Activated naive CD4-positive, alpha-beta T cell treated with anti-CD3 and anti-CD28 coated beads, Interleukin-2, amount 10 ng/mL, durations not matched to agents 7 days and 5 days (primary cell): ENCODE measurements at regions of chr22 and their contacts with region 1.

Region 1: GRCh38 chr22:37686002-37686982 is at the start of gene NOL12:
- DNase-seq: peak; percentile 83
- H3K4me3 Mint-ChIP-seq: peak within 1 kb of the TSS; percentile 92
- H3K27ac Mint-ChIP-seq: peak within 1 kb of the TSS; percentile 90
- H3K4me1 Mint-ChIP-seq: peaks cover 32% of the 10 kb centered on the region
- H3K27me3 Mint-ChIP-seq: no peaks in the 10 kb centered on the region

Region 2: DNA sequence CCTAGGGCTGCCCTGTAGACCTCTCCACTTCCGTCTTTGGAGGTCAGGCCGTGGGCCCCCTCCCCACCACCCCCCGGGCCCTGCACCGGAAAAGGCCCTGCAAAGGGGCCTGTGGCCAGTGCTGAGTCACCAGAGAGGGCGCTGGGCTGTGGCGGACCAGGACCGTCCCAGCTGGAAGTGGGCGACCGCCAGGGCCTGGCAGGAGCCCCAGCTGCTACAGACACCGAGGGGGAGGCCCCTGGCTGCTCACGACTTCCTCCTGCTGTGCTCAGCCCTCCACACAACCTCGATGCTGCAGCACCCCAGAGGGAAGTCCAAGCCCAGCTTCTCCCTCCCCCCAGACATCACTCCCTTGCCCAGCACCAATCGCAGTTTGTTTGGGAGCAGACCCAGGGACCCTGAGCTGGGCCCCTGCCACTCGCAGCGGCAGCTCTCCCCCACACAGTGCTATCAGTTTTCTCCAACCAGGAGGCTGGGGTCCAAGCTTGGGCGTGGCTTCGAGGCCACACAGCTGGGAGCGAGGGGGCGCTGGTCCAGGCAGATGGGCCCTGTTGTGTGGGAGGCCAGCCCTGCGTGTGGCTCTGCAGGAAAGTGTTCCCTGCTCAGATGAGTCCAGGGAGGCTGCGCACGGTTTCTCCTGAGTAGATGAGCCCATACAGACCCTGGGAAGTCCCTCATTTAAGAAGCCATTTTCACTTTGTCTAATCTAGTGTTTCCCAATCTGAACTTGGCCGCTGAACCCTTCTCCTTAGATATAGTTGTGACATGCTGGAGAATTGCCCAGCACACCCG is 52.5 kb before region 1 on chr22:
- CTCF ChIA-PET with region 1: interaction called, 506 read pairs
- DNase-seq: peak; percentile 67
- H3K4me3 Mint-ChIP-seq: peak overlapping the region; percentile 46
- H3K27ac Mint-ChIP-seq: peak overlapping the region; percentile 90
- H3K4me1 Mint-ChIP-seq: peaks cover 73% of the 10 kb centered on the region
- H3K27me3 Mint-ChIP-seq: no peaks in the 10 kb centered on the region

Region 3: DNA sequence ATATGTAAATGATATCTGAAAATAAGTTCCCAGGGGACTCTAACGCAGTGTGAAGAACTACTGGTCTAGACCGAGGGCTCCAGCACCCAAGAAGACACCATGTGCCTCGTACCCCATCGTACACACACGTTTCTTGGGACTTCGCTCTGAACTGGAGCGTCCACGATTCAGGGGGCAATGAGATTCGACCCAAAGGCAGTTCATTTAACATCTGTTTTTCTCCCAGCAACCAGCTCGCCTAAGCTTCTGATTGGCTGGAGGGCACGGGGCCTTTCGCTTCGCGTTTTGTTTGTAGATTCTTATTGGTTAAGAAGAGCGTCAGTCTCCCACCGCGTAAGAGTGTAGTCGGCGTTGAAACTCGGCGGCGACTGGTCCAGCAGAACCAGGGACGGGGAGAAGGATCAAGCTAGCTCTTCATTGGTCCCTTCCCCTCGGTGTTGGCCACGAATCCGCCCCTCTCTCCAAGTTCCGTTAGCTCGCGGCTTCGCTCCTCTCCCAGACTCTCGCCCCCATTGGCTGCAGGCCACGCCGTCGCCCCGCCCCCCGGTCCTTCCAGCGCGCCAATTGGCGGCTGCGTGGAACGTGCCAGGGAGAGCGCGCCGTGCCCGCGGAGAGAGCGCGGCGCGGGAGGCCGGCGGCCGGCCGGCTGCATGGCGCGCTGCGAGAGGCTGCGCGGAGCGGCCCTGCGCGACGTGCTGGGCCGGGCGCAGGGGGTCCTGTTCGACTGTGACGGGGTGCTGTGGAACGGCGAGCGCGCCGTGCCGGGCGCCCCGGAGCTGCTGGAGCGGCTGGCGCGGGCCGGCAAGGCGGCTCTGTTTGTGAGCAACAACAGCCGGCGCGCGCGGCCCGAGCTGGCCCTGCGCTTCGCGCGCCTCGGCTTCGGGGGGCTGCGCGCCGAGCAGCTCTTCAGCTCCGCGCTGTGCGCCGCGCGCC is 27.9 kb before region 1 on chr22 and contains the start of gene PDXP:
- CTCF ChIA-PET with region 1: interaction called, 54 read pairs
- DNase-seq: peak; percentile 99
- H3K4me3 Mint-ChIP-seq: peak within 1 kb of the TSS; percentile 81
- H3K27ac Mint-ChIP-seq: peak within 1 kb of the TSS; percentile 90
- H3K4me1 Mint-ChIP-seq: peaks cover 40% of the 10 kb centered on the region
- H3K27me3 Mint-ChIP-seq: no peaks in the 10 kb centered on the region

Region 4: GRCh38 chr22:37672206-37672919 is 13.9 kb before region 1 on chr22:
- CTCF ChIA-PET with region 1: interaction called, 11 read pairs
- DNase-seq: peak; percentile 50
- H3K4me3 Mint-ChIP-seq: no peak overlapping the region
- H3K27ac Mint-ChIP-seq: peak overlapping the region; percentile 76
- H3K4me1 Mint-ChIP-seq: peaks cover 54% of the 10 kb centered on the region
- H3K27me3 Mint-ChIP-seq: no peaks in the 10 kb centered on the region

Region 5: GRCh38 chr22:37870273-37870672 is 184.0 kb after region 1 on chr22:
- CTCF ChIA-PET with region 1: no interaction called
- DNase-seq: no peak
- H3K4me3 Mint-ChIP-seq: no peak overlapping the region
- H3K27ac Mint-ChIP-seq: peak overlapping the region; percentile 28
- H3K4me1 Mint-ChIP-seq: no peaks in the 10 kb centered on the region
- H3K27me3 Mint-ChIP-seq: no peaks in the 10 kb centered on the region